Activated naive CD4-positive, alpha-beta T cell treated with anti-CD3 and anti-CD28 coated beads for 36 hours (primary cell): ENCODE measurements at regions of chr19 and their contacts with region 1.

Region 1: GRCh38 chr19:47697863-47698609 is 15.2 kb upstream of the EHD2 start:
- DNase-seq: peak; percentile 74
- H3K4me3 Mint-ChIP-seq: no peak overlapping the region
- H3K27ac Mint-ChIP-seq: no peak overlapping the region
- H3K4me1 Mint-ChIP-seq: peaks cover 2% of the 10 kb centered on the region
- H3K27me3 Mint-ChIP-seq: no peaks in the 10 kb centered on the region

Region 2: DNA sequence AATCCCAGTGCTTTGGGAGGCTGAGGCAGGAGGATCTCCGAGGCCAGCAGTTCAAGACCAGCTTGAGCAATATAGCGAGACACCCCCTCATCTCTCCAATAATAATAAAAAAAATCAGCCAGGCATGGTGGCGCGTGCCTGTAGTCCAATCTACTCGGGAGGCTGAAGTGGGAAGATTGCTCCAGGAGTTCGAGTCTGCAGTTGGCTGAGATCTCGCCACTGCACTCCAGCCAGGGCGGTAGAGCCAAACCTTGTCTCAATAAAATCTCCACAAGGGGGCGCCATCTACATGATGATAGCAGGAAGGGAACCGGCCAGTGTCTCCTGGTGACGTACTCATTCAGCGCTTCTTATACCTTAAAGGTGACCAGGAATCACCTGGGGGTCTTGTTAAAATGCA is 402.0 kb before region 1 on chr19:
- CTCF ChIA-PET with region 1: no interaction called
- intact Hi-C with region 1: loop called (anchors 2 kb)
- DNase-seq: peak; percentile 91
- H3K4me3 Mint-ChIP-seq: no peak overlapping the region
- H3K27ac Mint-ChIP-seq: no peak overlapping the region
- H3K4me1 Mint-ChIP-seq: no peaks in the 10 kb centered on the region
- H3K27me3 Mint-ChIP-seq: no peaks in the 10 kb centered on the region

Region 3: DNA sequence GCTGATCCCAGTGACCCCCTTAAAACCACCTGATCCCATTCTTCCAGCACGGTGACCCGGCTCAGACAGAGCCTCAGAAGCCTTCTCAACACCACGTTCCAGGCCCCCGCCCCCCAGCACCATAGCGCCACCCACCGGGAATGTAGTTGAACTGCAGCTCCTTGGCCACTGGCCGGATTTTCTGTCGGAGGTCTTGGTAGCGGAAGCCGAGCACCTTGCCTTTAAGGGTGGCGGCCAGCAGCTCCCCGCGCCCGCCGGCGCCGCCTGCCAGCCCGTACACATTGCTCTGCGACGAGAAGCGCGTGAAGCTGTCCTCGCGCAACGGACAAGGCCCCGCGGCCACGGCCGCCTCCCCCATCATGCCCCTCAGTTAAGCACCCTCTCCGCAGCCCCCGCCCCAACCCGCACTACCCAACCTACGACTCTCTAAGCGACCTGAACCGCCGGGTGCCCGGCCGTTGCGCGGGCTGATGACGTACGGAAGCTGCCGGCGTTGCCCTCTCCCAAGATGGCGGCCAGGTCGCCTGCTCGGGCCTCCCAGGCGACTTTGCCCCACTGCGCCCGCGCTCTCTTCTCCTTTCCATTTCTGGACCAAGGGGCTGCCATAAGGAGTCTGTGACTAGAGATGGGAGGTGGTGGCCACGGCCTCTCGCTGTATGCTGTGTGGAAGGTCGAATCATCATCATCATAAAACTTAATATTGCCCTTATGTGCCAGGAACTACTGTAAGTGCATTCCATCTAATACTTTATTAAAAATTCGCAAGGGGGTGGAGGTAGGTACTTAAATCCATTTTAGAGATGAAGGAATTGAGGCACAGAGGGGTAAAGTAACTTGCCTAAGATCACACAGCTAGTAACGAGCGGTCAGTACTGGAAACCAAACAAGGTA is 214.0 kb before region 1 on chr19 and contains the start of gene KPTN:
- CTCF ChIA-PET with region 1: no interaction called
- intact Hi-C with region 1: loop called (anchors 2 kb)
- DNase-seq: peak; percentile 93
- H3K4me3 Mint-ChIP-seq: peak within 1 kb of the TSS; percentile 99
- H3K27ac Mint-ChIP-seq: peak within 1 kb of the TSS; percentile 98
- H3K4me1 Mint-ChIP-seq: peaks cover 31% of the 10 kb centered on the region
- H3K27me3 Mint-ChIP-seq: no peaks in the 10 kb centered on the region
- total RNA-seq, gene KPTN: 14.2 to 15.5 TPM

Region 4: DNA sequence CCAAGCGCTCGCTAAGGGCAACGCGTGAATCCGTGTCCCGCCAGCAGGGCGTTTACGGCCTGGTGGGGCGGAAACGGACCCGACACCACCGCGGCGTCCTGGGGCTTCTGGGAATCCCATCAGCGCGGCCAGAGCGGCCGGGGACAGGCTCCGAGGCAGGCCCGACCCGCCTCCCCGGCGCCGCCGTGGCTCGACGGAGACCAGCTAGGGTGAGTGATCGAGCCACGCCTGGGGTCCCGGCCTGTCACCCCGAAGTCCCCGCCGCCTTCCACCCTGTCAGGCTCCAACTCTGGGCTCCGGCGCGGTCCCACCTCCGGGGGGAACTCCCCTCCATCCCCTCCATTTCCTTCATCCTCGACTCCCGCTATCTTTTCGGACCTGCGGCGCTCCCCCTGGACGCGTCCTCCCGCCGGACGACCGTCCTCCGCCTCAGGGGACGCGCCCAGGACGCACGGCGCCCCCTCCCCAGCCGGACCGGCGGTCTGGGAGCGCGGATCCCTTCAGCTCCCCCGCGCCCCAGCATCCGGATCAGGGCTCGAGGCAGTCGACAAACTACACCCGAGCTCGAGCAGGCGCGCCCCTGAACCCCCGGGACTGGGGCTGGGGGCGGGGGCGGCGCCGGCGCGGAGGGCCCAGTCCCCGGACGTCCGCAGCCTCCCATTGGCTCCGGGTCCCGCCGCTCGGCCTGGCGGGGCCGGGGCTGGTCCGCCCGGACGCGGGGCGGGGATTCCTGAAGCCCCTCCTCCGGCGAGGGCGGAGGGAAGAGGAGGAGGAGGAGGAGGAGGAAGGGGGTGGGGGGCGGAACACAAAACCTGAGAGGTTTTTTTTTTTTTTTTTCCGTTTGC is 89.7 kb before region 1 on chr19:
- CTCF ChIA-PET with region 1: no interaction called
- intact Hi-C with region 1: loop called (anchors 5 kb)
- DNase-seq: peak; percentile 96
- H3K4me3 Mint-ChIP-seq: peak overlapping the region; percentile 81
- H3K27ac Mint-ChIP-seq: peak overlapping the region; percentile 72
- H3K4me1 Mint-ChIP-seq: peaks cover 21% of the 10 kb centered on the region
- H3K27me3 Mint-ChIP-seq: no peaks in the 10 kb centered on the region

Region 5: DNA sequence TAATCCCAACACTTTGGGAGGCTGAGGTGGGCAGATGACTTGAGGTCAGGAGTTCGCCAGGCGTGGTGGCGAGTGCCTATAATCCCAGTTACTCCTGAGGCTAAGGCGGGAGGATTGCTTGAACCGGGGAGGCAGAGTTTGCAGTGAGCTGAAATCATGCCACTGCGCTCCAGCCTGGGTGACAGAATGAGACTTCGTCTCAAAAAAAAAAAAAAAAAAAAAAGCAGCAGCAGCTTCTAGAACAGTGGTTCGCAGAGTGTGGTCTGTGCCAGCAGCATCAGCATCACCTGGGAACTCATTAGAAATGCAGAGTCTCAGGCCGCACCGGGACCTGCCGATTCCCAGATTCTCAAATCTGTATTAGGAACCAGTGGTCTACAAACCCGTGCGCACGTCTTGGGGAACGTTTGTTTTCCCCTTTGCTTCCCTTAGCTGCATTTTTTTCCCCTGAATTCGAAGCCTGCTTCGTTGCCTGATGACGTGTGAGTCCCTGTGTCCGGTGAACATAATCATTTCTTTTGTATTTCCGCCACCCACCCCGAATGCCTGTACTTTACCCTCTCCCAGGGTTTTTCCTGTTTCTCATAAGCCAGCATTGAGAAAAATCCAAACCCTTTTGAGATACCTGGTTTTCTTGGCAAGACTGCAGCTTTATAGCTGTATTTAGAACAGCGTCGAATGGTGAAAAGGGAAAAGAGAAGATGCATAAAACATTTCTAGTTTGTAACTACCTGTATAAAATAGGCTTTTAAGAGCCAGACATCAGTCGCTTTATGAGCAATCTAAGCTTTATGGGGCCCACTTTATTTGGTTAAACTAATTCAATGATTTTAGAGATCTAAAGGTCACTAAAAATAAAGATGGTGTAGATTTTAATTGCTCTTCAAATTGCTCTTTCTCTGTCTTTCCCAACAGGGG is 39.3 kb before region 1 on chr19:
- CTCF ChIA-PET with region 1: no interaction called
- intact Hi-C with region 1: no loop called
- DNase-seq: no peak
- H3K4me3 Mint-ChIP-seq: no peak overlapping the region
- H3K27ac Mint-ChIP-seq: no peak overlapping the region
- H3K4me1 Mint-ChIP-seq: peaks cover 13% of the 10 kb centered on the region
- H3K27me3 Mint-ChIP-seq: no peaks in the 10 kb centered on the region

Region 6: DNA sequence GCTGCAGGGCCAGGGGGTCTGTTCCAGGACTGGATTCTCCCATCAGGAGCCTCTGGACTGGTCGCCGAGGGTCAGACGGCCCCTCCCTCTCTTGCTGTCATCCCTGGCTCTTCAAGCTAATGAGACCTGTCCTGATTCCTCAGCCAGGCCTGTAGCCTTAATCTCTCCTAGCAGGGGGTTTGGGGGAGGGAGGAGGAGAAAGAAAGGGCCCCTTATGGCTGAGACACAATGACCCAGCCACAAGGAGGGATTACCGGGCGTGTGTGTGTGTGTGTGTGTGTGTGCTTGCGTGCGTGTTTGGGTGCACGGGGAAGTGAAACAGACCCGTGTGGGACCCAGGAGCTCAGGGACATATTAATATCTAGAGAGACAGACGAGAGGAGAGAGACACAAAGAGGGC is 121.8 kb after region 1 on chr19:
- CTCF ChIA-PET with region 1: no interaction called
- intact Hi-C with region 1: no loop called
- DNase-seq: no peak
- H3K4me3 Mint-ChIP-seq: no peak overlapping the region
- H3K27ac Mint-ChIP-seq: no peak overlapping the region
- H3K4me1 Mint-ChIP-seq: no peaks in the 10 kb centered on the region
- H3K27me3 Mint-ChIP-seq: peaks cover 22% of the 10 kb centered on the region